ENCODE measurements at regions of chr7 and their contacts with region 1.

Region 1: DNA sequence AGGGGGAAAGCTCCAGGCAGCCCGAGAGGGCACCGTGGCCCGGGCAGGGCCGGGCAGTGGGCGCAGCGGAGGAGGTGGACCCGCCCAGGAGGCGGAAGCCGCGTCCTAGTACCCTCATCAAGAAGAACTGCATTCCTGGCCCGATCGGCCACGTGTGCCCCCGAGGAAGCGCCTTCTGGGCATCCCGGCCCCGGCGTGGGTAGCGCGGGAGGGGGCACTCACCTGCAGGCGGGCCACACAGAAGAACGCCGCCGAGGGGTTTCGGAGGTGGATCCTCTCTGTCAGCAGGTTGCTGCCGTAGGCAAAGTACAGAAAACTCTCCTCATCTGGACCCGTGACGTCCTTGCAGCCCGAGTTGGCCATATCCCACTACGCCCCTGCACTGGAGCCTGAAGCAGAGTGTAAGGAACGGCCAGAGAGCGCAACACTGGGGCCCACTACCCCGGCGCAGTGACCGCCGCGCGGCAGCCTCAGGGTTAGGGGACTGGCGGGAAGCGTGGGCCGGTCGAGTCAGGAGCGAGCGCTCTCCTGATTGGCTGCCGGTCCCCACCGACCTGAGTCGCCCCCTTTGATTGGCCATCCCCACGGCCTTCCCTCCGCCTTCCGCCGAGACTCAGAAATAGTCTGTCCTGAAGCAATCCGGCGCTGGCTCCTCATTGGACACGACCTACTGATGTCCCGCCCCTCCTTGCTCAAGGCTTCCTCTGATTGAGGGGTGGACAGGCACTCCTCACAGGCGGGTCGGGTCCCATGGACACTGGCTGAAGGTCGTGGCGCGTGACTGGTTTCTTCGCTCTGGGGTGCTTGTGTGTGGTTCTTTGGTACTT is at the start of gene GGCT:
- DNase-seq: peak; percentile 96
- ATAC-seq: peak; percentile 97
- H3K4me3 ChIP-seq: peak within 1 kb of the TSS; percentile 68 to 92
- H3K27ac ChIP-seq: peak within 1 kb of the TSS; percentile 66
- H3K4me1 ChIP-seq: peaks cover 4 to 20% of the 10 kb centered on the region in 2 experiments; a peak in 2 of 4 replicates
- H3K27me3 ChIP-seq: no peaks in the 10 kb centered on the region
- CTCF ChIP-seq: no peak
- POLR2A ChIP-seq: peak; percentile 86
- RAD21 ChIP-seq: no peak
- total RNA-seq, gene GGCT: 60.6 TPM

Region 2: DNA sequence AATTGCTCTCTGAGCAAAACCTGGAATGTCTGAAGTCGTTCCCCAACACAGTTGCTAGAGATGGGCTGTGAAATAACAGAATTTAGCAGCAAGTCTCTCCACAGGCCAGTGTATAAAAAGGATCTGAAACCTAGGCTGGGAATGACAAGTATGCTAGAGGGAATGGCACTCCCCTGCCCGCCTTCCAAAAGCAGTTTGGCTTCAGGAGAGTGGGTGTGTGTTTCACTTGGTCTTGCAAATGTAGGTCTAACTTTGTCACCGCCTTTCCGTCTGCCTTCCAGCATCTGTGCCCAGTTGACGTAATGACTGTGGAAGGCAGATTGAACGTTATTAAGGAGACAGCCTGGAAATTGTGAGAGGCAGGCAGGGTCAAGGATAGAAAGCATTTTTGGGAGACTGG is 387.8 kb before region 1 on chr7:
- CTCF ChIA-PET with region 1: no interaction called
- POLR2A ChIA-PET with region 1: no interaction called
- RAD21 ChIA-PET with region 1: no interaction called
- intact Hi-C with region 1: no loop called
- DNase-seq: no peak
- ATAC-seq: no peak
- H3K4me3 ChIP-seq: no peak overlapping the region
- H3K27ac ChIP-seq: no peak overlapping the region
- H3K4me1 ChIP-seq: no peaks in the 10 kb centered on the region
- H3K27me3 ChIP-seq: no peaks in the 10 kb centered on the region
- CTCF ChIP-seq: no peak
- POLR2A ChIP-seq: no peak
- RAD21 ChIP-seq: no peak

Region 3: DNA sequence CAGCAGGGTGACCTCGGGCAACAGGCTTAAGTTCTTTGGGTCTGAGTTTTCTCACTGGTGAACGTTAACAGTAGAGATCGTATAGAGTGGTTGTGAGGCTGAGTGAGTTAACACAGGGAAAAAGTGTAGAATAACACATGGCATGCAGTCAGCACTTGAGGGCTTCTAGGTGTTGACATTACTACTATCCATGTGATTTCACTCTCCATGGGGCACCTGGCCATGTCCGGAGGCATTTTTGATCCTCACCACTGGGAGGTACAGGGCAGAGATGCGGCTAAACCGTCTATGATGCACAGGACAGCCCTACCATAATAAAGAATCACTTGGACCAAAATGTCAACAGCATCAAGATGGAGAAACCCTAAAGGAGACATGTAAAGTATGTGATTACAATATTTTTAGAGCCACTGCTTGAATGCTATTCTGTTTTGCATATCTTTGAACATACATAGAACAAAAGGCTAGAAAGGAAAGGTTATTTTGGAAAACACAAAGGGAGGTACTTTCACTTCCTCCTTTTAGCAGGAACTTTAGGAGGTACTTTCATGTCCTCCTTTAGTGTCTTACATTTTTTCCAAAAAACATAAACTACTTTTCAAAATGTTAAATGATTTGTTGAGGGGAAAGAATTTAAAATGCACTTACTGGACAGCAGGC is 70.3 kb before region 1 on chr7:
- CTCF ChIA-PET with region 1: no interaction called
- POLR2A ChIA-PET with region 1: no interaction called
- RAD21 ChIA-PET with region 1: no interaction called
- intact Hi-C with region 1: no loop called
- DNase-seq: no peak
- ATAC-seq: no peak
- H3K4me3 ChIP-seq: no peak overlapping the region
- H3K27ac ChIP-seq: no peak overlapping the region
- H3K4me1 ChIP-seq: peaks cover 3 to 6% of the 10 kb centered on the region in 2 experiments; a peak in 1 of 4 replicates
- H3K27me3 ChIP-seq: no peaks in the 10 kb centered on the region
- CTCF ChIP-seq: no peak
- POLR2A ChIP-seq: no peak
- RAD21 ChIP-seq: no peak

Region 4: GRCh38 chr7:30478349-30479201 is 26.0 kb before region 1 on chr7 and contains the start of gene NOD1:
- CTCF ChIA-PET with region 1: no interaction called
- POLR2A ChIA-PET with region 1: no interaction called
- RAD21 ChIA-PET with region 1: no interaction called
- intact Hi-C with region 1: loop called (anchors 2 kb)
- DNase-seq: peak; percentile 44
- ATAC-seq: peak; percentile 94
- H3K4me3 ChIP-seq: peak within 1 kb of the TSS; percentile 66 to 84
- H3K27ac ChIP-seq: peak within 1 kb of the TSS; percentile 76
- H3K4me1 ChIP-seq: peaks cover 5 to 19% of the 10 kb centered on the region in 2 experiments; a peak in 3 of 4 replicates
- H3K27me3 ChIP-seq: no peaks in the 10 kb centered on the region
- CTCF ChIP-seq: 0 out of 6 replicates have a peak, but pooled peaks of 1 of the 3 experiments have one; percentile 4
- POLR2A ChIP-seq: no peak
- RAD21 ChIP-seq: no peak
- total RNA-seq, gene NOD1: 5.9 TPM

Measured in HCT116 (cell line).